Posterior cingulate gyrus (tissue), 11 donors: ENCODE measurements at regions of chr19 and their contacts with region 1.

Region 1: GRCh38 chr19:45336696-45337251 is 3.8 kb upstream of the KLC3 start:
- DNase-seq: no peak

Region 2: DNA sequence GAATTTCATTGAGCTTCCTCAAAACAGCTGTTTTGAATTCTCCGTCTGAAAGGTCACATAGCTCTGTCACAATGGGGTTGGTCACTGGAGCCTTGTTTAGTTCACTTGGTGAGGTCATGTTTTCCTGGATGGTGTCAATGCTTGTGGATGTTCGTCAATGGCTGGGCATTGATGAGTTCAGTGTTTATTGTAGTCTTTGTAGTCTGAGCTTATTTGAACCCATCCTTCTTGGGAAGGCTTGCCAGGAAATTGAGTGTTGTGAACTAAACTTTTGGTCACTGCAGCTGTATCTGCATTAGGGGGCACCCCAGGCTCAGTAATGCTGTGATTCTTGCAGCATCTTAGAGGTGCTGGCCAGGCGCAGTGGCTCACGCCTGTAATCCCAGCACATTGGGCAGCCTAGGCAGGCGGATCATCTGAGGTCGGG is 136.2 kb before region 1 on chr19:
- intact Hi-C with region 1: loop called (anchors 5 kb)
- DNase-seq: peak in 6 of 10 donors; percentile 17 to 92 (median 34)

Region 3: DNA sequence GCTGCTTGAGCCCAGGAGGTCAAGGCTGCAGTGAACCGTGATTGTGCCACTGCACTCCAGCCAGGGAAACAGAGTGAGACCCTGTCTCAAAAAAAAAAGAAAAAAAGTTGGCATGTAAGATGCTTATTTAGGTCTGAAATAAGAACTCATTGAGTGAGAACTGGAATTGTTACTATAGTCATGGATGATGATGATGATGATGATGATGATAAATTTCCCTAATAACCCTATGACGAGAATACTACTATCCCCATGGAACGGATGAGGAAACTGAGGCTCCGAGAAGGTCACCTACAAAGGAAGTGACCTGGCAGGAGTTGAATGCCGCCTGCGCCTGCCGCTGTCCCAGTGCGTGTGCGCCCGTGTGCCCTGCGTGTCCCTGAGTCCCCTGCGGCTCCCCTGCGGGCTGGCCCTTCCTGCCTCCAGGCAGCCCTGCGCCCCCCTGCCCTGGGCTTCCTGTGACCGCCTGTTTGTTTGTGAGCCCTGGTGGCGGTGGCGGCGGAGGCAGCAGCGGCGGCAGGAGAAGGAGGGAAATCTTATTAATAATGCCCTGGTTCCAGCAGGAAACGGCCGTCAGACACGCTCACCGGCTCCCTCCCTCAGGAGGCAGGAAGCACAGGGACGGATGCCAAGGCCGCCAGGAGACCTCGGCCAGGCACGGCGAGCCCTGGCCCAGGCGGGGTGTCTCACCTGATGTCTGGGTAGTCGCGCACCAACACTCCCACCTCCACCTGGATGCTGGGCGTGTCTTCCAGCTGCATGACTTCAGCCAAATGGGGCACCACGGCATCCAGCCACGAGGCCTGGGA is 121.2 kb before region 1 on chr19:
- intact Hi-C with region 1: no loop called
- DNase-seq: peak in 1 of 10 donors; percentile 34

Region 4: GRCh38 chr19:45444311-45445041 is 107.7 kb after region 1 on chr19:
- intact Hi-C with region 1: no loop called
- DNase-seq: peak; percentile 76 to 98 (median 89)